ENCODE measurements at regions of chr16 and their contacts with region 1.

Region 1: DNA sequence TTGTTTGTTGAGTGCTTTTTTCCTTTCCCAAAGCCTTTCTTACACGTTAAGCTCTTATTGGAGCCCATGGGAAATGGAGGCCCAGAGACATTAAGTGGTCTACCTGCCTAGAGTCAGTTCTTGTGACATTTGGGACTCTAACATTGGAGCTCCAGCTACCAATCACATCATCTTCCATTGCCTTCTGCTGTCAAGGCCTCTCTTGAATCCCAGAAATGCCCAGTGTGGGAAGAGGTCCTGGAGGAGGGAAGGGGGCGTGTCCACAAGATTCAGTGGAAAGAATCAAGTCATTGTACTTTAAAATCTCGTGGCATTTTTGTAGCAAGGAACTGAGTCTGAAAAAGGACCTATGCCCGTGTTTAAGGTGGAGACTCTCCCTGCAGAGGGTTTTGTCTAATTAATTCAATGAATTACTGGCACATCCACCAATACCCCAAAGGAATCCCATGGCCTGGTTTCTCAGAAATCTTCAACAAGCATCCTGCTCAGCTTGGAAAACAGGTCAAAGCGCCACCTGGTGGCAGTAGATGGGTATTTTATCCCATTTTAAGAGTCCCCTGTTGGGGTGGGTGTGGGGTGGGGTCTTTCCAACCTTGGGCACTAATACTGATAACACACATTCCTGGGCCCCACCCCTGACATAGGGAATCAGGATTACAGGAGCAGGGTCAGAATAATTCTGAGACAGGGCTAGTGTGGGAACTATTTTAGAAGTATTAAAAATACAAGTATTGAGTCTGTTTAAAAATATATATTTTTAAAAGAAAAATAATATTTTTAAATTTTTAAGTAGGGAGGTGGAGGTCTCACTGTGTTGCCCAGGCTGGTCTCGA is 24.6 kb downstream of the GPT2 start:
- DNase-seq: peak; percentile 31 to 49
- H3K4me3 ChIP-seq: no peak overlapping the region
- H3K27ac ChIP-seq: no peak overlapping the region
- H3K4me1 ChIP-seq: no peaks in the 10 kb centered on the region
- H3K27me3 ChIP-seq: no peaks in the 10 kb centered on the region
- CTCF ChIP-seq: peak; percentile 51 to 89 (median 70)
- POLR2A ChIP-seq: no peak

Region 2: DNA sequence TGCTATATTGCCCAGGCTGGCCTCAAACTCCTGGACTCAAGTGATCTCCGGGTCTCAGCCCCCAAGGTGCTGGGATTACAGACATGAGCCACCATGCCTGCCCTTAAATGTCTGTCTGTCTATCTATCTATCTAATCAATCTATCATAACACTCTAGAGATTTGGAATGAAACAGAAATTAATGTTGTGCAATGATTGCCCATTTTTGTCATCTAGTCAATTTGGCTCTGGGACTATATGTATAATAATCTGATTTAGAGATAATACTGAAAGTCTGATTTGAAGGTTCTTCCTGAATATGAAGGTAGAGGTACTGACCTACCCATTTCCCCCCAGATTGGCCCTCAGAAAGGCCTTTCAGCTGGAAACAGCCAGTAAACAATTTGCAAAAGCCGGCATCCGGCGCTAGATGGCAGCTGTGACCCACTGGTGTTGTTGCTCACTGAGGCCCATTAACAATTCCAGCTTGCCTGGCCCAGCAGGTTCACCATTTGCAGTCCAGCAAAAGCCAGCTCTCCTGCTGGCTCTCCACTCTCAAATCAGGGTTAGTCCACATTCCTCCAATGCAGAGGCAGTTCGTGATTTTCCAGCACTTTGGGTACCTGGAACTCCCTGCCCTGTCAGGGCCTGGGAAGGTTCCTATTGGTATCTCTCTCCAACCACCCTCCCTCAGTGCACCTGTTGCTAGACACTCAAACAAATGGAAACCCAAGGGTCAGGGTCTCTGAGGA is 54.9 kb before region 1 on chr16:
- intact Hi-C with region 1: loop called (anchors 5 kb)
- DNase-seq: peak; percentile 60 to 70
- H3K4me3 ChIP-seq: no peak overlapping the region
- H3K27ac ChIP-seq: no peak overlapping the region
- H3K4me1 ChIP-seq: no peaks in the 10 kb centered on the region
- H3K27me3 ChIP-seq: no peaks in the 10 kb centered on the region
- CTCF ChIP-seq: peak; percentile 67 to 80 (median 74)
- POLR2A ChIP-seq: no peak

Measured in uterus (tissue), 4 donors.